ENCODE measurements at regions of chr20 and their contacts with region 1.

Region 1: GRCh38 chr20:7935027-7935551 is 5.2 kb downstream of the HAO1 start:
- DNase-seq: no peak
- ATAC-seq: no peak
- H3K4me3 ChIP-seq: no peak overlapping the region
- H3K27ac ChIP-seq: no peak overlapping the region
- H3K4me1 ChIP-seq: no peaks in the 10 kb centered on the region
- H3K27me3 ChIP-seq: no peaks in the 10 kb centered on the region
- CTCF ChIP-seq: no peak
- POLR2A ChIP-seq: no peak

Region 2: GRCh38 chr20:6886065-6886729 is 1048.9 kb before region 1 on chr20:
- in situ Hi-C with region 1: no loop called
- intact Hi-C with region 1: loop called (anchors 5 kb)
- DNase-seq: peak in 1 of 2 donors; percentile 14
- ATAC-seq: peak; percentile 41 to 54
- H3K4me3 ChIP-seq: no peak overlapping the region
- H3K27ac ChIP-seq: no peak overlapping the region
- H3K4me1 ChIP-seq: no peaks in the 10 kb centered on the region
- H3K27me3 ChIP-seq: no peaks in the 10 kb centered on the region
- CTCF ChIP-seq: no peak
- POLR2A ChIP-seq: no peak

Region 3: DNA sequence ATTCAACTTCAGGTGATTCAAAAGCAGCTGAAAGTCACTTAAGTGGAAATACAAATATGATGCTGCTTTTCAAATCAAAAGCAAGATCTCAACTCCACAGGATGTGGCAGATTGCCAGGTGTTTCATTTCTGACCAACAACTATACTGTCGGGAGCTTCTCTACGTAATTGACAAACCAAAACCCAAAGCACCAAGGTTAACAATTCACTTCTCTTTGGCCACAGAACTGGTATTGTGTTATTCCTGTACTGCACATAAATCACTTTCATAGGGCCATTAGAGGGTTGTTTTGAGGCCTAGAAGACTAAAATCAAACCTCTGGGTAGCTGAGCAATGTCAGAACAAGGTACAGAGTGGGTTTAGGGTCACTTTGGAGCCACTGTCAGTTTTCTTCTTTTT is 164.5 kb before region 1 on chr20:
- in situ Hi-C with region 1: no loop called
- intact Hi-C with region 1: no loop called
- DNase-seq: no peak
- ATAC-seq: no peak
- H3K4me3 ChIP-seq: no peak overlapping the region
- H3K27ac ChIP-seq: no peak overlapping the region
- H3K4me1 ChIP-seq: no peaks in the 10 kb centered on the region
- H3K27me3 ChIP-seq: no peaks in the 10 kb centered on the region
- CTCF ChIP-seq: no peak
- POLR2A ChIP-seq: no peak